ENCODE measurements at regions of chr6 and their contacts with region 1.

Region 1: DNA sequence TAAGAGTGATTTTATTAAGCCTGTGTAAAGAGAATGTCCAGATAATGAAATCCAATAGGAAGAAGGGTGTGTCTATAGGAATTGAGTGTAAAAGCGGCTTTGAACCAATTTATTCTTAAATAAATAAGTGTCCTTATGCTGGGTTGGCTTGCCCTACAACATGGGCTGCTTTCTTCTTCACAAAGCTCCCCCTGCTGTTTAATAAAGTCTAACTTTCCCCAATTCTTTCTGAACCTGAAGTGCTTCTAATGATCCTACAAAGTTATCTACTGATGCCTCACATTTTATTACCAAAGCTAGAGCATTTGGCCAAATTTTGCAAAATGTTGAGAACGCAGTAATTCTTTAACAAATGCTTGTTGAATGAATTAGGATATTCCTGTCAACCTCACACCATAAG is 36.3 kb upstream of the SIRT5 start:
- DNase-seq: no peak
- H3K4me3 ChIP-seq: no peak overlapping the region
- H3K27ac ChIP-seq: no peak overlapping the region
- H3K4me1 ChIP-seq: peaks cover 0 to 17% (median 10%) of the 10 kb centered on the region in 4 donors
- H3K27me3 ChIP-seq: no peaks in the 10 kb centered on the region
- CTCF ChIP-seq: peak; percentile 34 to 55 (median 41)
- EP300 ChIP-seq: no peak
- POLR2A ChIP-seq: no peak

Region 2: GRCh38 chr6:11810039-11810541 is 1728.0 kb before region 1 on chr6:
- in situ Hi-C with region 1: no loop called
- intact Hi-C with region 1: no loop called
- DNase-seq: peak; percentile 91
- H3K4me3 ChIP-seq: no peak overlapping the region
- H3K27ac ChIP-seq: peak overlapping the region; percentile 59 to 80 (median 72)
- H3K4me1 ChIP-seq: peaks cover 8 to 27% (median 16%) of the 10 kb centered on the region in 4 donors
- H3K27me3 ChIP-seq: no peaks in the 10 kb centered on the region
- CTCF ChIP-seq: no peak
- EP300 ChIP-seq: no peak
- POLR2A ChIP-seq: no peak

Region 3: GRCh38 chr6:12941422-12941821 is 596.7 kb before region 1 on chr6:
- in situ Hi-C with region 1: loop called in 1 of 4 experiments (anchors 25 kb)
- intact Hi-C with region 1: no loop called
- DNase-seq: no peak
- H3K4me3 ChIP-seq: no peak overlapping the region
- H3K27ac ChIP-seq: no peak overlapping the region
- H3K4me1 ChIP-seq: no peaks in the 10 kb centered on the region
- H3K27me3 ChIP-seq: no peaks in the 10 kb centered on the region
- CTCF ChIP-seq: no peak
- EP300 ChIP-seq: no peak
- POLR2A ChIP-seq: no peak

Region 4: GRCh38 chr6:13190376-13190775 is 347.7 kb before region 1 on chr6:
- in situ Hi-C with region 1: no loop called
- intact Hi-C with region 1: no loop called
- DNase-seq: no peak
- H3K4me3 ChIP-seq: no peak overlapping the region
- H3K27ac ChIP-seq: no peak overlapping the region
- H3K4me1 ChIP-seq: no peaks in the 10 kb centered on the region
- H3K27me3 ChIP-seq: no peaks in the 10 kb centered on the region
- CTCF ChIP-seq: no peak
- EP300 ChIP-seq: no peak
- POLR2A ChIP-seq: no peak

Region 5: GRCh38 chr6:13234130-13234529 is 304.0 kb before region 1 on chr6:
- in situ Hi-C with region 1: no loop called
- intact Hi-C with region 1: no loop called
- DNase-seq: no peak
- H3K4me3 ChIP-seq: no peak overlapping the region
- H3K27ac ChIP-seq: no peak overlapping the region
- H3K4me1 ChIP-seq: no peaks in the 10 kb centered on the region
- H3K27me3 ChIP-seq: no peaks in the 10 kb centered on the region
- CTCF ChIP-seq: no peak
- EP300 ChIP-seq: no peak
- POLR2A ChIP-seq: no peak

Region 6: DNA sequence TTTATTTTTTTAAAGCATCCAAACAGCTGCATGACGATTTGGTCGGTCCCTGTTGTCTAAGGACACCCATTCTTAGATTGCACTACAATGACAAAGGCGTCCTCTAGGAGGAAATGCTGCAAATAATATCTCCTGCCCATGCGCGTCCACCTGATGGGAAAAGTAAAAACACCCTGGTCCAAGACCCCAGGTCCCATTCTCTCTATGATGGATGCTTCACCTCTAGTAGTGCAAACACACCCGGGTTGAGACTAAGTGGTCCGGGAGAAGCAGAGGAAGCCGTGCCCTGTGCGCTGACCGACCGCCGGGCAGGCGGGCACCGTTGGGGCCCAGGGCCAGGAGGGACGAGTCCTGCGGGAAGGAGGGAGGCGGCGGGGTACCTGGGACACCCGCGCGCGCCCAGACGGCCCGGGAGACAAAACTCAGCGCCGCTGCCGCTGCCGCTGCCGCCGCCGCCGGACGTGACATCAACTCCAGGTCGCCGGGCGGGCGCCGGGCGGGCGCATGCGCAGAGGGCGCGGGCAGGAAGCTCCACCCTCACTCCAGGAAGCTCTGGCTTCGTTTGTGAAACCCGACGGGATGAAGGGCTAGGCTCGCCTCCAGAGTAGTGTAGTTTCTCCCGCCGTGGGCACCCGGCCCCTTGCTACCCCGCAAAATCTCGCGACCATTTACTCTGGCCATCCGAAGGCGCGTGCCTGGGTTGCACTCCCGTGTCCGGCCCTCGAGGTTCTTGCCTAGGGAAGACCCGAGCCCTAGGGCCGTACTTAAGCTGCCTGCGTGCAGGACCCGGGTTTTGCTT is 209.8 kb before region 1 on chr6 and contains the start of gene TBC1D7:
- in situ Hi-C with region 1: loop called in 2 of 4 experiments (anchors 10 to 25 kb)
- intact Hi-C with region 1: no loop called
- DNase-seq: peak; percentile 95
- H3K4me3 ChIP-seq: peak within 1 kb of the TSS; percentile 55 to 98 (median 78)
- H3K27ac ChIP-seq: peak within 1 kb of the TSS; percentile 90 to 98 (median 94)
- H3K4me1 ChIP-seq: peaks cover 6 to 18% (median 13%) of the 10 kb centered on the region in 4 donors
- H3K27me3 ChIP-seq: no peaks in the 10 kb centered on the region
- CTCF ChIP-seq: peak in 4 of 5 experiments; percentile 16 to 60 (median 27)
- EP300 ChIP-seq: no peak
- POLR2A ChIP-seq: peak; percentile 94
- total RNA-seq, gene TBC1D7: 10.5 to 39.8 (median 15.0) TPM

Measured in transverse colon (tissue), 4 donors.